Heart right ventricle (tissue), 16 donors: ENCODE measurements at regions of chr9 and their contacts with region 1.

Region 1: DNA sequence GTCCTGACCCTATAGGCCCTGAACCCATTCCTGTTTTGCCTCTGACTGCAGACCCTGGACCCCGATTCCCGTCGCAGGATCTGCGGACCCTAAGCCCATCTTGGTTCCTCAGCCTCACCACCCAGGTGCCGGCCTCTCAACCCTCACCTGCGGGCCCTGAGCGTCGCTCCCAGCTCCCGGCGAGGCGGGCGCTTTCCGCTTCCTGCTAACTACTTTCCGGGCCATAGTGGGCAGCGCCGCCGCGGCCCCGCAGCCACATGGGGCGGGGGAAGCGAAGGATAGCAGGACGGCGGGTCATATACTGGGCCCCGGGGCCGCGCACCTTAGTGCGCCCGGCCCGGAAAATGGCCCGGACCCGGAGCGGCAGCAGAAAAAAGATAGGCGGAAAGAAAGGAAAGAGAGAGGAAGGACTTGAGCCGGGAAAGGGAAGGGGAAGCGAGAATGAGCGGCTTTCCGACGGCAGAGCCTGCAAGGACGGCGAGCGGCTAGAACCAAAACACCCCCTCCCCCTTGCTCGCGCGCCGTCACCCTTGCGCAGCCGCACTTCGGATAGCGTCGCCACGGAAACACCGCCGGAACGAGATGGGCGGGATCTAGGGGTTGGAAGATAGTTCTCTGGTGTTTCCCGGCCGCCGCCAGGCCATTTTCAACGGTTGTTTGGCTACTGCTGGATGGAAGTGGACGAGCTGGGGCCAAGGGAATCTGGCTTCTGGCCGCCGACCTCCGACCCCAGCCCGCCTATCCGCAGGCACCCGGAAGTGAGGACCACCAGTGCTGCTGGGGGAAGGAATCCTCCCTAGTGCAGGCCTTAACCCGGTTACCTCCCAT is at the start of gene DCAF12:
- DNase-seq: peak; percentile 92 to 94
- ATAC-seq: peak; percentile 97 to 99 (median 98)
- H3K4me3 ChIP-seq: peak within 1 kb of the TSS; percentile 64 to 99 (median 84)
- H3K27ac ChIP-seq: peak within 1 kb of the TSS; percentile 48 to 98 (median 90)
- H3K4me1 ChIP-seq: peaks cover 0 to 50% (median 40%) of the 10 kb centered on the region in 9 donors
- H3K27me3 ChIP-seq: no peaks in the 10 kb centered on the region
- CTCF ChIP-seq: peak in 1 of 9 donors; percentile 15
- total RNA-seq, gene DCAF12: 13.8 to 24.2 (median 16.7) TPM

Region 2: GRCh38 chr9:34070606-34071324 is 55.7 kb before region 1 on chr9:
- intact Hi-C with region 1: no loop called
- DNase-seq: no peak
- ATAC-seq: no peak
- H3K4me3 ChIP-seq: no peak overlapping the region
- H3K27ac ChIP-seq: no peak overlapping the region
- H3K4me1 ChIP-seq: peaks cover 0 to 6% (median 0%) of the 10 kb centered on the region in 9 donors
- H3K27me3 ChIP-seq: no peaks in the 10 kb centered on the region
- CTCF ChIP-seq: no peak

Region 3: GRCh38 chr9:34084562-34084961 is 41.9 kb before region 1 on chr9:
- intact Hi-C with region 1: loop called in 1 of 10 experiments (anchors 5 kb)
- DNase-seq: peak in 1 of 2 donors; percentile 27
- ATAC-seq: peak; percentile 55 to 83 (median 60)
- H3K4me3 ChIP-seq: no peak overlapping the region
- H3K27ac ChIP-seq: peak overlapping the region in 9 of 10 donors; percentile 10 to 80 (median 61)
- H3K4me1 ChIP-seq: peaks cover 0 to 40% (median 18%) of the 10 kb centered on the region in 9 donors
- H3K27me3 ChIP-seq: no peaks in the 10 kb centered on the region
- CTCF ChIP-seq: no peak

Region 4: GRCh38 chr9:34096751-34097150 is 29.7 kb before region 1 on chr9:
- intact Hi-C with region 1: loop called in 1 of 10 experiments (anchors 1 kb)
- DNase-seq: no peak
- ATAC-seq: peak in 7 of 8 donors; percentile 20 to 81 (median 78)
- H3K4me3 ChIP-seq: no peak overlapping the region
- H3K27ac ChIP-seq: peak overlapping the region in 6 of 10 donors; percentile 40 to 73 (median 60)
- H3K4me1 ChIP-seq: peaks cover 0 to 23% (median 0%) of the 10 kb centered on the region in 9 donors
- H3K27me3 ChIP-seq: no peaks in the 10 kb centered on the region
- CTCF ChIP-seq: no peak

Region 5: GRCh38 chr9:34178520-34179212 is 52.2 kb after region 1 on chr9 and contains the start of gene UBAP1:
- intact Hi-C with region 1: loop called in 5 of 10 experiments (anchors 2 to 10 kb)
- DNase-seq: peak; percentile 95 to 97
- ATAC-seq: peak; percentile 98 to 100 (median 100)
- H3K4me3 ChIP-seq: peak within 1 kb of the TSS; percentile 62 to 90 (median 72)
- H3K27ac ChIP-seq: peak within 1 kb of the TSS; percentile 68 to 97 (median 92)
- H3K4me1 ChIP-seq: peaks cover 0 to 35% (median 17%) of the 10 kb centered on the region in 9 donors
- H3K27me3 ChIP-seq: no peaks in the 10 kb centered on the region
- CTCF ChIP-seq: no peak
- total RNA-seq, gene UBAP1: 39.5 to 54.2 (median 43.3) TPM

Region 6: DNA sequence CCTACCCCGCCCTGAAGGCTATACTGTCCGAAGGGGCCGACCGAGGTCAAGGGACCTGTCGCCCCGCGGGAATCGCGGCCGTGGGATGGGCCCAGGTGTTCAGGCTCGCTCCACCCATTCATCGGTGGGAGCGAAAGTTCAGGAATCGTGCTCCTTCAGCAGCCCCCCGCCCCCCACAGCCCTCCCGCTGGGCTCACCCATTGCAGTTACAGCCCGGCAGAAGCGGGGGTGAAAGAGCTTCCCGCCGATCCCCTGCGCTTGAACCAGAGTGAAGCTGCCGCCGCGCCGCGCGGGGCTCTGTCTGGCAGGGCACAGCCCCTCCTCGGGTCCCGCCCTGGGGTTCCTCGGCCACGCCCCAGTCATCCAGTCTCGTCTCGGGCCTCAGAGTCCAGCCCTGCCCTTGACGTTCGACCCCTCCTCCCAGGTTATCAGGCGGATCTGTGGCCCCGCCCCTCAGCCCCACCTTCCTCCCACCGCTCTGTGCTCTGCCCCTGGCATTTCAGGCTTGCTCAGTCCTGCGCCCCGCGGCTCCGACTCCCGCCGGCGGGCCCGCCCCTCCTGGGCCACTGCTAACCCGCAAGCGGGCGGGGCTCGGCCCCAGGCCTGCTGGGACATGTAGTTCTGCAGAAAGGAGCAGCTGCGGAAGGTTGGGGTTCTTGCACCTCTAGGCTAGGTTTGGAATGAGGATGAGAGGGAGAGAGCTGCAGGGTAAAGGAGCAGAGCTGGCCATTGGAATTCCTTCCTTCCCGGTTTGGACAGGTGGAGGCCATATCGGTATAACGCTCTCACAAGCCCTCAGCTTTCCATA is 250.4 kb after region 1 on chr9 and contains the start of gene MYORG:
- intact Hi-C with region 1: loop called in 1 of 10 experiments (anchors 5 kb)
- DNase-seq: peak; percentile 92 to 94
- ATAC-seq: peak; percentile 77 to 89 (median 84)
- H3K4me3 ChIP-seq: peak within 1 kb of the TSS; percentile 55 to 92 (median 80)
- H3K27ac ChIP-seq: peak within 1 kb of the TSS; percentile 35 to 88 (median 75)
- H3K4me1 ChIP-seq: peaks cover 6 to 53% (median 39%) of the 10 kb centered on the region in 9 donors
- H3K27me3 ChIP-seq: peaks cover 0 to 7% (median 0%) of the 10 kb centered on the region in 7 donors
- CTCF ChIP-seq: no peak
- total RNA-seq, gene MYORG: 4.9 to 9.1 (median 7.1) TPM

Region 7: GRCh38 chr9:35774907-35775635 is 1648.7 kb after region 1 on chr9:
- intact Hi-C with region 1: no loop called
- DNase-seq: peak in 1 of 2 donors; percentile 25
- ATAC-seq: peak; percentile 45 to 82 (median 58)
- H3K4me3 ChIP-seq: no peak overlapping the region
- H3K27ac ChIP-seq: peak overlapping the region in 3 of 10 donors; percentile 1 to 44 (median 17)
- H3K4me1 ChIP-seq: peaks cover 7 to 37% (median 30%) of the 10 kb centered on the region in 9 donors
- H3K27me3 ChIP-seq: no peaks in the 10 kb centered on the region
- CTCF ChIP-seq: no peak